Activated T-helper 1 cell treated with anti-CD3 and anti-CD28 coated beads, Interleukin-12 subunit alpha, Interleukin-12 subunit beta, Interleukin-2, Interleukin-4 antibody, amounts not matched to agents 30 ng/mL and 10 ng/mL and 1 ng/mL, durations not matched to agents 14 hours and 24 hours and 36 hours (primary cell): ENCODE measurements at regions of chr17 and their contacts with region 1.

Region 1: GRCh38 chr17:44044067-44044466 is 22.4 kb downstream of the LSM12 start:
- DNase-seq: no peak
- H3K4me3 Mint-ChIP-seq: no peak overlapping the region
- H3K27ac Mint-ChIP-seq: no peak overlapping the region
- H3K4me1 Mint-ChIP-seq: peaks cover 29% of the 10 kb centered on the region
- H3K27me3 Mint-ChIP-seq: no peaks in the 10 kb centered on the region

Region 2: GRCh38 chr17:43673516-43674323 is 370.3 kb before region 1 on chr17:
- intact Hi-C with region 1: no loop called
- DNase-seq: peak; percentile 58
- H3K4me3 Mint-ChIP-seq: no peak overlapping the region
- H3K27ac Mint-ChIP-seq: no peak overlapping the region
- H3K4me1 Mint-ChIP-seq: peaks cover 11% of the 10 kb centered on the region
- H3K27me3 Mint-ChIP-seq: peaks cover 11% of the 10 kb centered on the region

Region 3: GRCh38 chr17:43878260-43879175 is 165.5 kb before region 1 on chr17:
- intact Hi-C with region 1: loop called (anchors 1 kb)
- DNase-seq: peak; percentile 49
- H3K4me3 Mint-ChIP-seq: no peak overlapping the region
- H3K27ac Mint-ChIP-seq: no peak overlapping the region
- H3K4me1 Mint-ChIP-seq: no peaks in the 10 kb centered on the region
- H3K27me3 Mint-ChIP-seq: peaks cover 2% of the 10 kb centered on the region

Region 4: GRCh38 chr17:43940630-43941029 is 103.4 kb before region 1 on chr17:
- intact Hi-C with region 1: loop called (anchors 1 kb)
- DNase-seq: peak; percentile 4
- H3K4me3 Mint-ChIP-seq: no peak overlapping the region
- H3K27ac Mint-ChIP-seq: no peak overlapping the region
- H3K4me1 Mint-ChIP-seq: peaks cover 12% of the 10 kb centered on the region
- H3K27me3 Mint-ChIP-seq: peaks cover 17% of the 10 kb centered on the region

Region 5: DNA sequence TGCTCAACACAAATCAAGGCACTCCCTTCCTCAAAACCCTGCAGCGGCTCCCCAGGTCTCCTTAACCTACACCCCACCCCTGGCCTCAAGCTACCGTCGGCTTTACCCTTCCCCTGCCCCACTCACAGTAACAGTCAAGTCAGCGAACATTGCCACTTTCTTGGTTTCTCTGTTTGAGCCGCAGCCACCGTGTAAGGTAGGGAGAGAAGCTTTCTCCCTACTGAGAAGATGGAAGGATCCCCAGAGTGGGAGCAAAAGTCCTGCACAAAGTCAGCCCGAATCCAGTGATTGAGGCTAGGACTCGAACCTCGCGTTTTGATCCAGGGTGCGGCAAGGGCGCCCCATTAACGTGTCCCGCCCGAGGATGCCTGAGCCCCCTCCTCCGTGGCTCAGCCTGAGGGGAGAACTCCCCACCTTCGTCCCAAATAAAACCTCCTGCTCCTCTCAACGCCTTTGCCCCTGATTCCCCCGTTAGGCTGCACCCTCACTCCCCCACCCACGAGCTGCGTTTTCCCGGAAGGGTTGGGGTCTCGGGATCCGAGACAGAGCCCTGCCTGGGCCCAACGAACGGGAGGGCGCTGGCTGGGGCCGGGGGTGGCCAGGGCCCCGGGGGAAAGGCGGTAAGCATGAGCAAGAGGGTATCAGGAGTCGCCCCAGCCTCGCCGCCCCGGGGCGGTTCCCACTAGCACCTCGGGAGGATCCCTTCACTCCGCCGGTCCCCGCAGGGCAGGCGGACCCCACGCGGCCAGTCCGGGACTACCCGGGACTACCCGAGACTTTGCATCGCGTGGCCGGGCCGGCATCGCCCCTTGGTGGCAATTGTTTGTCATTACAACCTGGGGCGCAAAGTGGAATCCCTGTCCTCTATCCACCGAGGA is 49.6 kb before region 1 on chr17:
- intact Hi-C with region 1: loop called (anchors 1 kb)
- DNase-seq: peak; percentile 55
- H3K4me3 Mint-ChIP-seq: no peak overlapping the region
- H3K27ac Mint-ChIP-seq: no peak overlapping the region
- H3K4me1 Mint-ChIP-seq: no peaks in the 10 kb centered on the region
- H3K27me3 Mint-ChIP-seq: peaks cover 28% of the 10 kb centered on the region

Region 6: GRCh38 chr17:44070455-44071197 is 26.6 kb after region 1 on chr17 and contains the start of gene G6PC3:
- intact Hi-C with region 1: loop called (anchors 1 kb)
- DNase-seq: peak; percentile 78
- H3K4me3 Mint-ChIP-seq: peak within 1 kb of the TSS; percentile 98
- H3K27ac Mint-ChIP-seq: peak within 1 kb of the TSS; percentile 99
- H3K4me1 Mint-ChIP-seq: peaks cover 16% of the 10 kb centered on the region
- H3K27me3 Mint-ChIP-seq: no peaks in the 10 kb centered on the region
- total RNA-seq, gene G6PC3: 33.5 and 34.9 TPM in 2 replicates